Breast epithelium (tissue), 4 donors: ENCODE measurements at regions of chr11 and their contacts with region 1.

Region 1: DNA sequence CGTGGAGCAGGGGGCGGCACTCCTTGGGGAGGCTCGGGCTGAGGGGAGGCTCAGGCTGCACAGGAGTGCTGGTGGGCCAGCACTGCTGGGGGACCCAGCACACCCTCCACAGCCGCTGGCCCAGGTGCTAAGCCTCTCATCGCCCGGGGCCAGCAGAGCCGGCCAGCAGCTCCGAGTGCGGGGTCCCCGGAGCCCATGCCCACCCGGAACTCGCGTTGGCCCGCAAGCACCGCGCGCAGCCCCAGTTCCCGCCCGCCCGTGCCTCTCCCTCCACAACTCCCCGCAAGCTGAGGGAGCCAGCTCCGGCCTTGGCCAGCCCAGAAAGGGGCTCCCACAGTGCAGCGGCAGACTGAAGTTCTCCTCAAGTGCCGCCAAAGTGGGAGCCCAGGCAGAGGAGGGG is 2266.8 kb downstream of the LRRC4C start:
- DNase-seq: no peak
- H3K4me3 ChIP-seq: no peak overlapping the region
- H3K27ac ChIP-seq: no peak overlapping the region
- H3K4me1 ChIP-seq: no peaks in the 10 kb centered on the region
- H3K27me3 ChIP-seq: no peaks in the 10 kb centered on the region
- CTCF ChIP-seq: no peak
- POLR2A ChIP-seq: no peak

Region 2: GRCh38 chr11:39304586-39304985 is 111.9 kb after region 1 on chr11:
- intact Hi-C with region 1: loop called (anchors 5 kb)
- DNase-seq: no peak
- H3K4me3 ChIP-seq: no peak overlapping the region
- H3K27ac ChIP-seq: no peak overlapping the region
- H3K4me1 ChIP-seq: no peaks in the 10 kb centered on the region
- H3K27me3 ChIP-seq: no peaks in the 10 kb centered on the region
- CTCF ChIP-seq: no peak
- POLR2A ChIP-seq: no peak